Endothelial cell of umbilical vein (primary cell): ENCODE measurements at regions of chr1 and their contacts with region 1.

Region 1: DNA sequence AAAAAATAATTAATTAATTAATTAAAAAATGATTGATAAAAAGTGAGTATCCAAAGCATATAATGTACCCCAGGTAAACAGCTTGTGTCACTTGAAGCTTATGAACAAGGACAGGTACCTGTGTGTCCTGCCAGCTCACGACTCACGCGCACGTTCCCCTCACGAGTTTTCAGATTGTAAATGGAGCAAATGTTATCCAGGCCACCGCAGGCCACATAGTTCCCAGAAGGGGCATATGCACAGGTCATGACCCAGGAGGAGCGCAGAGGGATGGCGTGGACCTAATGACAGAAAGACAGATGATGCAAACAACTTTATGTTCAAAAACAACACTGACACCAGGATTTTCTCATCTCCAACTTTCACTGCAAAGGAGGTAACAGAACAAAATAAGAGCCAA is 26.0 kb upstream of the NADK start:
- DNase-seq: no peak
- H3K4me3 ChIP-seq: no peak overlapping the region
- H3K27ac ChIP-seq: no peak overlapping the region
- H3K4me1 ChIP-seq: no peaks in the 10 kb centered on the region
- H3K27me3 ChIP-seq: no peaks in the 10 kb centered on the region
- CTCF ChIP-seq: no peak
- POLR2A ChIP-seq: no peak

Region 2: GRCh38 chr1:1783320-1783719 is 21.0 kb before region 1 on chr1:
- CTCF ChIA-PET with region 1: no interaction called
- POLR2A ChIA-PET with region 1: no interaction called
- dilution Hi-C with region 1: no loop called
- intact Hi-C with region 1: no loop called
- DNase-seq: no peak
- H3K4me3 ChIP-seq: no peak overlapping the region
- H3K27ac ChIP-seq: no peak overlapping the region
- H3K4me1 ChIP-seq: peaks cover 13% of the 10 kb centered on the region
- H3K27me3 ChIP-seq: no peaks in the 10 kb centered on the region
- CTCF ChIP-seq: no peak
- POLR2A ChIP-seq: no peak

Region 3: GRCh38 chr1:1815606-1816281 is 11.4 kb after region 1 on chr1:
- CTCF ChIA-PET with region 1: no interaction called
- POLR2A ChIA-PET with region 1: interaction called, 11 read pairs
- dilution Hi-C with region 1: no loop called
- intact Hi-C with region 1: no loop called
- DNase-seq: no peak
- H3K4me3 ChIP-seq: no peak overlapping the region
- H3K27ac ChIP-seq: no peak overlapping the region
- H3K4me1 ChIP-seq: no peaks in the 10 kb centered on the region
- H3K27me3 ChIP-seq: no peaks in the 10 kb centered on the region
- CTCF ChIP-seq: no peak
- POLR2A ChIP-seq: no peak